PC-3 (cell line): ENCODE measurements at regions of chr5 and their contacts with region 1.

Region 1: GRCh38 chr5:39138892-39139291 is 64.7 kb upstream of the RICTOR start:
- DNase-seq: peak; percentile 97
- ATAC-seq: peak; percentile 86
- H3K4me3 ChIP-seq: 0 out of 2 replicates have a peak overlapping the region, but pooled peaks have one; percentile 11
- H3K27ac ChIP-seq: peak overlapping the region; percentile 94
- H3K4me1 ChIP-seq: peaks cover 42% of the 10 kb centered on the region
- H3K27me3 ChIP-seq: no peaks in the 10 kb centered on the region
- CTCF ChIP-seq: no peak

Region 2: GRCh38 chr5:39100851-39101396 is 38.0 kb before region 1 on chr5:
- CTCF ChIA-PET with region 1: no interaction called
- POLR2A ChIA-PET with region 1: no interaction called
- intact Hi-C with region 1: loop called (anchors 5 kb)
- DNase-seq: peak; percentile 99
- ATAC-seq: peak; percentile 91
- H3K4me3 ChIP-seq: peak overlapping the region; percentile 53; the same call in 1 of the 2 replicates
- H3K27ac ChIP-seq: peak overlapping the region; percentile 97
- H3K4me1 ChIP-seq: peaks cover 52% of the 10 kb centered on the region
- H3K27me3 ChIP-seq: no peaks in the 10 kb centered on the region
- CTCF ChIP-seq: no peak

Region 3: GRCh38 chr5:39394946-39395345 is 256.1 kb after region 1 on chr5:
- CTCF ChIA-PET with region 1: no interaction called
- POLR2A ChIA-PET with region 1: no interaction called
- intact Hi-C with region 1: no loop called
- DNase-seq: peak; percentile 74
- ATAC-seq: peak; percentile 52
- H3K4me3 ChIP-seq: no peak overlapping the region
- H3K27ac ChIP-seq: peak overlapping the region; percentile 52
- H3K4me1 ChIP-seq: peaks cover 35% of the 10 kb centered on the region
- H3K27me3 ChIP-seq: no peaks in the 10 kb centered on the region
- CTCF ChIP-seq: no peak